GM10248 (cell line): ENCODE measurements at regions of chr1 and their contacts with region 1.

Region 1: DNA sequence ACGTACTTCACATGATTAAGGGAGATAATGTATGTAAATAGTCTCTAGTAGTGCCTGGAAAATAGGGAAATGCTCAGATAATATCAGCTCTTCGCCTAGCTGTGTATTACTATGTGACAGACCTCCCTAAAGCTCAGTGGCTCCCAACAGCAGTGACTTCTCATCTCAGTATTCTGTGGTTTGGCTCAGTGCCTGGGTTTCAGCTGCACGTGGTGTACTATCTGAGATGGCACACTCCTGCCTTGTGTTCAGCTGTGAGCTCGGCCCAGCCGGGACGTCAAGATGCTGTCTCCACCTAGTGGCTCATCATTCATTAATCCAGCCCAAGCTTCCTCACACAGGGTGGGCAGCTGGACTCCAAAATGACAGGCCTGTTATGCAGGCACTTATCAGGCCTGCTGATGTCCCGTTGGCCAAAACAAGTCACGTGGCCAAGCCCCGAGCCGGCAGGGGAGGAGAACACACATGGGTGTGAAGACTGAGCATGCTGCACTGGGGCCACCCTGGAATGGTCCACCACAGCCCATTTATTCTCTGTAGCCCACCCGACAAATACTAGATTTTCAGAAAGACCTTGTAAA is 17.8 kb downstream of the SLFNL1 start:
- DNase-seq: peak; percentile 83
- CTCF ChIP-seq: peak; percentile 57

Region 2: GRCh38 chr1:40802078-40802741 is 201.5 kb before region 1 on chr1:
- CTCF ChIA-PET with region 1: no interaction called
- POLR2A ChIA-PET with region 1: no interaction called
- DNase-seq: peak; percentile 97
- CTCF ChIP-seq: no peak

Region 3: GRCh38 chr1:40919475-40920011 is 84.2 kb before region 1 on chr1:
- CTCF ChIA-PET with region 1: no interaction called
- POLR2A ChIA-PET with region 1: no interaction called
- DNase-seq: no peak
- CTCF ChIP-seq: no peak

Region 4: DNA sequence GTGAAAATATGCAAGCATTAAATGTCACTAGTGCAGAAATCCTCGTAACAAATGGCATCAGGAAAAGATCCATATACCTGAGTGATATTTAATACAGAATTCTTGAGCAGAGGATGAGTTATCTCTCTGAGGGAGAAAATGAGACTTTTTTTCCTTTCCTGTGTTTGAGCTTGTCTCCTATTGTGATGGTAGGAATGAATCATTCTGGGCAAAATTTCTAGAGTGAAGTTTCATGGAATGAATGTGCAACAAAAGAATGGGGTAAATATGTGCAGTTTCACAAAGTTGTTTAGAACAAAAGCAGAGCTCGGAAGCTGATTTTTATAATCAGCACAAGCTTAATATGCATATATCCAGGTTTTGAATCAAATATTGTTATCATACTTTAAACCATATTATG is 19.7 kb before region 1 on chr1:
- CTCF ChIA-PET with region 1: interaction called, 19 read pairs
- POLR2A ChIA-PET with region 1: interaction called, 4 read pairs
- DNase-seq: no peak
- CTCF ChIP-seq: no peak

Region 5: GRCh38 chr1:41014871-41015270 is 11.1 kb after region 1 on chr1:
- CTCF ChIA-PET with region 1: interaction called, 11 read pairs
- POLR2A ChIA-PET with region 1: no interaction called
- DNase-seq: no peak
- CTCF ChIP-seq: no peak

Region 6: DNA sequence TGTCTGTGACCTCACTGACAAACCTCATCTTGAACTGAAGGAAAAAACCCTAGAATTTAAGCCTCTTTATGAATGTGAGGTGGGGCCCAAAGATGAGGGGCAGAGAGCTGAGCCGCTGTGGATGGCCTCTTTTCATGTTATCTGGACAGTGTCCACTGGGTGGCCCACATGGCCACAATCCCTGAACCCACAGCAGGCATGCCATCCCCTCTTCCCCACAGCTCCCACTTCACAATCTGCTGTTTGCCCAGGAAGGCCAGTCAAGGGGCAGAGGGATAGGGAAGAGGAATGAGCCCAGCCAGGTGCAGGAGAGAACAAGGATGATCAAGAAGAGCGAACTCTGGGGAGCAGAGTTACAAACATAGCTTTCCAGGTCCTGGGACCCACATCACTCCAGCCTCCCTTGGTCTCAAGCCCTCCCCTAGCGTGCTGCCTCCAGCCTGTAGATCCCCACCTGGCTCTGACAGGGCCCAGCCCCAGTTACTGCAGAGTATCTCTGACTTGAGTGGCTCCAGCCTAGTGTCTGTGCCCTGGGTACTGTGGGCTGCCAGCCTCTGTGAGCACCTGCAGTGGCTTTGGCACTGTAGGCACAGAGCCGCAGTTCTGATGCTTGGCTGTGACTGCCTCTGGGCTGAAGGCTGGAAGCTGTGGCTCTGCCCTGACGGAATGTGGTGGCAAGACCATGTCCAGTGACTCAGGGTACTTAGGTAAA is 19.7 kb after region 1 on chr1:
- CTCF ChIA-PET with region 1: interaction called, 11 read pairs
- POLR2A ChIA-PET with region 1: no interaction called
- DNase-seq: no peak
- CTCF ChIP-seq: no peak